PC-9 (cell line): ENCODE measurements at regions of chr9 and their contacts with region 1.

Region 1: DNA sequence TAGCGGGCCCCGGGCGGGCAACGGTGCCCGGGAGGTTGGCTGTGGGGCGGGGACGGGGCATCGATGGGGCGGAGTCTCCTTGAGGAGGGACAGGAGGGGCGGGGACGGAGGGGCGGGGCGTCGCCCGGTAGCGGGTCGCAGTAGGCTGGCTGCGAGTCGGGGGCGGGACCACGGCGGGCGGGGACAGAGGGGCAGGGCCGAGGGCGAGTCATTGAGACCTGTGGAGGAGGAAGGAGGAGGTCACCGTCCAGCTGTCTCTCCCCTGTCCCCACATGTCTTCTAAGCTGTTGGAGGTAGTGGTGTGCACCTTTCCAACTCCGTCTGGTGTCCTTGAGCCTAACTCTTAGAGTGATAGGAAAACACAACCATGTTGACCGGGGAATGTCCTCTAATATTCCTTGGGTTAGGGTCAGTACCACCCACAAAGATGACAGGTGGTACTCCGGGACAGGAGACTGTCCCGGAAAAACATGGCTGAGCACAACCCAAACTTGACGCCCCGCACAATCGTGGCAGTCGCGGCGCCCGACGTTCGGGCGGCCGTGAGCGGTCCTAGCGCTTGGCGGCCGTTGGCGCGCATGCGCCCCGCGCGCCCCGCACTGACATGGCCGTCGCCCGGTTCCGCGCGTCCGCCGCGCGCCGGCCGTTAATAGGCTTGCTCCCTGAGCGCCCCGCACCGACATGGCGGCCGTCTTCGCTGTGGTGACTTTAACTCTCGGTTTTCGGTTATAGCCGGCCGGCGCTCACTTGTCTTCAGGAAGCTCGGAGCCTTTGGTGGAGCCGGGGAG is at the starts of genes CRAT and PTPA:
- DNase-seq: peak; percentile 78 to 96
- H3K4me3 ChIP-seq: peak within 1 kb of the TSS; percentile 93
- H3K27ac ChIP-seq: peak within 1 kb of the TSS; percentile 74
- H3K4me1 ChIP-seq: peaks cover 24% of the 10 kb centered on the region; the same call in 1 of the 2 replicates
- H3K27me3 ChIP-seq: no peaks in the 10 kb centered on the region
- CTCF ChIP-seq: no peak
- total RNA-seq, gene CRAT: 40.3 and 60.0 TPM in 2 replicates
- total RNA-seq, gene PTPA: 182 and 197 TPM in 2 replicates

Region 2: GRCh38 chr9:128370826-128371621 is 739.9 kb before region 1 on chr9 and contains the start of gene URM1:
- CTCF ChIA-PET with region 1: no interaction called
- POLR2A ChIA-PET with region 1: no interaction called
- intact Hi-C with region 1: loop called (anchors 5 kb)
- DNase-seq: peak; percentile 97
- H3K4me3 ChIP-seq: peak within 1 kb of the TSS; percentile 66
- H3K27ac ChIP-seq: peak within 1 kb of the TSS; percentile 54
- H3K4me1 ChIP-seq: peaks cover 18% of the 10 kb centered on the region; the same call in 1 of the 2 replicates
- H3K27me3 ChIP-seq: no peaks in the 10 kb centered on the region
- CTCF ChIP-seq: no peak
- total RNA-seq, gene URM1: 98.1 and 101 TPM in 2 replicates

Region 3: DNA sequence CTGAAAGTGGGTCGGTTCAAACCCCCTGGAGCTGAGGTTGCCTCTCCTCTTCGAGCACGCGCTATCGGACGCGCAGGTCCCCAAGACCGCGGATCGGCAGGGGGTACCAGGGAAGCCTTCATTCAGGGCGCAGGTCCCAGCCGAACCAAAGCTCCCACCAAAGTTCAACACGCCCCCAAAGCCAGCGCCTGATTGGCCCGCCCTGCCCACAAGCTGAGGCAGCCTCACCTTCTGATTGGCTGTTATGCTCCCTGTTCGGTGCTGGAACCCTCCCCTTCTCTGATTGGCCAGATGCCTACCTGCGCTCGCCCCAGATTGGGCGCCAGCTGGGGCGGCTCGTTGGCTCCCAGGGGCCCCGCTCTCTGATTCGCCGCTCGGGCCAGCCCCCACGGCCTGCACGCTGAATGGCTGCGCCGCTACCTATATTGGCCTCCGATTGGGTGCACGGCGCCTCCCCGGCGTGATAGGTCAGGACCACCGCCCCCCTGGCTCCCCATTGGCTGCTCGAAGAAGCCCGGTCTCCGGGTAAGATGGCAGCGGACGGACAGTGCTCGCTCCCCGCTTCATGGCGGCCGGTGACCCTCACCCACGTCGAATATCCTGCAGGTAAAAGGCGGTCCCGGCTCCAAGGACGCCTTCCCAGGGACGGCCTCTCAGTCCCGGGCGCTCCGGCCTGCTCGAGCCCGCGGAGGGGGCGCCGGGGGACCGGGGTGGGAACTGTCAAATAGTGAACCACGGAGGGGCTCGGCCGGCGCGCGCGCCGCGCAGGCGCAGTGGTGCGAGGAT is 30.1 kb before region 1 on chr9 and contains the start of gene DOLPP1:
- CTCF ChIA-PET with region 1: no interaction called
- POLR2A ChIA-PET with region 1: interaction called, 7 read pairs
- intact Hi-C with region 1: loop called (anchors 1 kb)
- DNase-seq: peak; percentile 99 to 100
- H3K4me3 ChIP-seq: peak within 1 kb of the TSS; percentile 73
- H3K27ac ChIP-seq: no peak within 1 kb of the TSS
- H3K4me1 ChIP-seq: peaks cover 27% of the 10 kb centered on the region
- H3K27me3 ChIP-seq: no peaks in the 10 kb centered on the region
- CTCF ChIP-seq: no peak
- total RNA-seq, gene DOLPP1: 21.5 and 24.4 TPM in 2 replicates